PC-9 (cell line): ENCODE measurements at regions of chr2 and their contacts with region 1.

Region 1: DNA sequence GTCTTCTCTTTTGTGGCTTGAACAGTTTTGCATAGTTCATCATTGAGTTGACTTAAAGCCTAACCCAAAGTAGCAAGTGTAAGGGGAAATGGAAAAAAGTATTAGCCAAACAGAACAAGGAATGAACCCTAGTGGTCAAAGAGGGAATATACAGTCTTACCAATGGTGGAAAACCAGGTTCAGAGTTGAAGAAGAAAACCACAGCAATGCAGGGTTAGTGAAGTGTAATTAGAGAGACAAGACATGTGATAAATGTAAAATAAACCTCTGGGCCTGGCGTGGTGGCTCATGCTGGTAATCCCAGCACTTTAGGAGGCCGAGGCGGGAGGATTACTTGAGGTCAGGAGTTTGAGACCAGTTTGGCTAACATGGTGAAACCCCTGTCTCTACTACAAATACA is 2.4 kb downstream of the TTN start:
- DNase-seq: no peak
- H3K4me3 ChIP-seq: no peak overlapping the region
- H3K27ac ChIP-seq: no peak overlapping the region
- H3K4me1 ChIP-seq: no peaks in the 10 kb centered on the region
- H3K27me3 ChIP-seq: no peaks in the 10 kb centered on the region
- CTCF ChIP-seq: peak; percentile 77

Region 2: GRCh38 chr2:178899656-178900055 is 94.9 kb after region 1 on chr2:
- CTCF ChIA-PET with region 1: no interaction called
- POLR2A ChIA-PET with region 1: no interaction called
- intact Hi-C with region 1: loop called (anchors 5 kb)
- DNase-seq: no peak
- H3K4me3 ChIP-seq: no peak overlapping the region
- H3K27ac ChIP-seq: no peak overlapping the region
- H3K4me1 ChIP-seq: no peaks in the 10 kb centered on the region
- H3K27me3 ChIP-seq: no peaks in the 10 kb centered on the region
- CTCF ChIP-seq: no peak

Region 3: DNA sequence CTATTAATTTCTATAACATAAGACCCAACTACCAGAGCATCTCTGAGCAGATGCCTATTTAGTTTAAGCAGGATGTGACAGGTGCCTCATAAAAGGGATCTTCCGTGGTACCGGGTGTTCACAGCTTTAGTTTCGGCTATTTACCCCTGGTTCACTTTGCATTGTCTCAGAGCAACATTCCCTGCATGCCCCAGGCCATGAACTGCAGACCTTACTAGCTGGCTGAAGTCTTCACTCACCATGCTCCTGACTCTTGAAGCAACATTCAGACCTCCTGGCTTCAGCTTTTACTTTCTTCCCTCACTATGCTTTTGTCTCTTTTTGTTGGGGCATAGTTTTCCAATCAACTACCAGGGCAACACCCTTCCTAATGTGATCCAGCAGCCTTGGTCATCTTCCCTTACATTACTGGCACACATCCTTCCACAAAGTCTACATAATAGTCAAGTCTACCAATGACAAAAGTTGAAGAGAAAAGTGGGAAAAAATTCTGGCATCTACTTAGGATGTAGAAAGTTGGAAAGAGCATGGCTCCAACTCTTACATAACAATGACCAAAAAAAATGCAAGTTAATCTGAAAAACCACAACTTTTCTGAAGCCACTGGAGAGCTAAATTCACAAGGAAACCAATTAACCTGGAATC is 360.7 kb after region 1 on chr2:
- CTCF ChIA-PET with region 1: no interaction called
- POLR2A ChIA-PET with region 1: no interaction called
- intact Hi-C with region 1: no loop called
- DNase-seq: no peak
- H3K4me3 ChIP-seq: no peak overlapping the region
- H3K27ac ChIP-seq: no peak overlapping the region
- H3K4me1 ChIP-seq: no peaks in the 10 kb centered on the region
- H3K27me3 ChIP-seq: no peaks in the 10 kb centered on the region
- CTCF ChIP-seq: no peak